Upper lobe of right lung (tissue), 1 donor: ENCODE measurements at regions of chr1 and their contacts with region 1.

Region 1: DNA sequence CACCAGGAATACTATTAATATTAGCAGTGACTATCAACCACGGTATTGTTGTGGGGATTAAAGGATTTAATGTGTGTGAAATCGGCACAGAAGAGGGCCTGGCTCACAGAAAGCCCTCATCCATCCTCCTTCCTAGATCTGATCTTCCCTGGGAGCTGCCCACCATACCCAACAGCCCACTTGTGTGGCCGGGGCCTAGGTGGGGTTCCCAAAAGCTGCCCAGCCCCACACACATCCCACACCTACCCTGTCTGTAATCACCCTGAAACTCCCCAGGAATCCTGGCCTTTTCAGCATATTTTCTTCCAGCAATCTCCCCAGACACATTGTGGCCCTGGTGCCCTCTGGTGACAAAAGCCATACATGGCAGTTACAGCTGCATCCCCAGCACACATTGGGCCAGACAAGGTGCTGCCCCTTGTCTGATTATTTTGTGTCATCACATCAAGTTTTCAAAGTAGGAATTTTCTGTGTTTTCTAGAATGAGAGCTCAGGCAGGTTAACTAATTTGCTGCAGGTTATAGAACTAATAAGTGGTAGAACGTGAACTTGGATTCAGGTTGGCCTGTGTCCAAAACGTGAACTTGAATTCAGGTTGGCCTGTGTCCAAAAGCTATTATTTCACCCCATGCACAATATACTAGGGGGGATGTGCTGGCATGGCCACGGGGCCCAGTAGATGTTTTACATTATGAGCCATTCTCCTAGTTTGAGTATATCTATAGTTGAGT is 5.3 kb upstream of the SLC6A9 start:
- DNase-seq: no peak
- ATAC-seq: peak; percentile 89
- H3K4me3 ChIP-seq: no peak overlapping the region
- H3K27ac ChIP-seq: peak overlapping the region; percentile 58
- H3K4me1 ChIP-seq: peaks cover 19% of the 10 kb centered on the region
- H3K27me3 ChIP-seq: no peaks in the 10 kb centered on the region
- CTCF ChIP-seq: peak; percentile 83

Region 2: GRCh38 chr1:43934101-43934985 is 102.2 kb before region 1 on chr1:
- intact Hi-C with region 1: no loop called
- DNase-seq: peak; percentile 87
- ATAC-seq: peak; percentile 81
- H3K4me3 ChIP-seq: peak overlapping the region; percentile 46
- H3K27ac ChIP-seq: no peak overlapping the region
- H3K4me1 ChIP-seq: peaks cover 22% of the 10 kb centered on the region
- H3K27me3 ChIP-seq: peaks cover 21% of the 10 kb centered on the region
- CTCF ChIP-seq: peak; percentile 81

Region 3: GRCh38 chr1:44002606-44003157 is 33.9 kb before region 1 on chr1:
- intact Hi-C with region 1: loop called (anchors 5 kb)
- DNase-seq: no peak
- ATAC-seq: no peak
- H3K4me3 ChIP-seq: no peak overlapping the region
- H3K27ac ChIP-seq: no peak overlapping the region
- H3K4me1 ChIP-seq: no peaks in the 10 kb centered on the region
- H3K27me3 ChIP-seq: no peaks in the 10 kb centered on the region
- CTCF ChIP-seq: no peak

Region 4: GRCh38 chr1:44294588-44295007 is 258.0 kb after region 1 on chr1:
- intact Hi-C with region 1: no loop called
- DNase-seq: no peak
- ATAC-seq: peak; percentile 51
- H3K4me3 ChIP-seq: no peak overlapping the region
- H3K27ac ChIP-seq: no peak overlapping the region
- H3K4me1 ChIP-seq: no peaks in the 10 kb centered on the region
- H3K27me3 ChIP-seq: no peaks in the 10 kb centered on the region
- CTCF ChIP-seq: peak; percentile 20